Colonic mucosa (tissue), 4 donors: ENCODE measurements at regions of chr22 and their contacts with region 1.

Region 1: GRCh38 chr22:24106385-24107381 is 74.6 kb upstream of the SUSD2 start:
- DNase-seq: no peak
- H3K4me3 ChIP-seq: no peak overlapping the region
- H3K27ac ChIP-seq: no peak overlapping the region
- H3K4me1 ChIP-seq: no peaks in the 10 kb centered on the region
- H3K27me3 ChIP-seq: no peaks in the 10 kb centered on the region
- CTCF ChIP-seq: no peak

Region 2: DNA sequence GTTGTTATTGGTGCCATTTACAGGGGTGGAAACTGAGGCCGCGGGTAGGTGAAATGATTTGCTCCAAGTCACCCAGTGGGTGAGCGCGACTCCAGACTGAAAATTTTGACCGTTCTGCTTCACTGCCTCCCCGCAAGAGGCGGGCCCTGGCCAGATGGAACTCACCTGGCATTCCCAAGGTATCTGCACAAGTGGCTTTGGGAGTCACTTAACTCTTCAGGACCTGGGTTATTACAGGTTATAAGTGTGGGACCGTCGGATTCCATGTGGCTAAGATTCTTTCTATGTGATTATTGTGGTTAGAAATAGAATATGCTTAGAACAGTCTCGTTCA is 95.0 kb before region 1 on chr22:
- intact Hi-C with region 1: no loop called
- DNase-seq: no peak
- H3K4me3 ChIP-seq: peak overlapping the region; percentile 97
- H3K27ac ChIP-seq: peak overlapping the region; percentile 88
- H3K4me1 ChIP-seq: no peaks in the 10 kb centered on the region
- H3K27me3 ChIP-seq: no peaks in the 10 kb centered on the region
- CTCF ChIP-seq: no peak

Region 3: GRCh38 chr22:24175160-24175808 is 68.6 kb after region 1 on chr22:
- intact Hi-C with region 1: loop called (anchors 10 kb)
- DNase-seq: peak; percentile 77
- H3K4me3 ChIP-seq: no peak overlapping the region
- H3K27ac ChIP-seq: no peak overlapping the region
- H3K4me1 ChIP-seq: no peaks in the 10 kb centered on the region
- H3K27me3 ChIP-seq: no peaks in the 10 kb centered on the region
- CTCF ChIP-seq: peak; percentile 85